ENCODE measurements at regions of chr3 and their contacts with region 1.

Region 1: DNA sequence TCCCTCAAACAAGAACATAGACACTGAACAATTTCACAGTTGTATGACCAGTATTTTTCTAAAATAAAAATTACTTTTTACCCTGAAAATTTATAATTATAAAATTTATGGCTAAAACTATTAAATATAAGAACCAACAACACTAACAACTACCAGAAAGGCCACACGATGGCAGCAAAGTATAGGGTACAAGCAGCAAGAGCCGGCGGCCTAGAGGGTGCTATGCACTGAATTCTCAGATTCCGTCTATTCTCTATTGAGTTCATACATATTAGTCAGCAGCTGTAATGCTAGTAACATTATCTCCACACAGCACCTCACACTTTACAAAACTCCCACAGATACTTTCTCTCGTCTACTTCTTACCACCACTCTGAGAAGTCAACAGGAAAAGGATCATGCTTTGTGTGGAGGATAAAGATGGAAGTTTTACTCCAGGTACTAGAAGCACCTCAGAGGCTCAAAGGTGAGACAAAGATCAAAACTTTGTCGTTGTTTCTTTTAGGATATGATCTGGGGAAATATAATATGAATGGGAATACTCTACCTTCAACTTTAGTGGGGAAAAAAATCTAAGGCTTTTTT is 160.5 kb downstream of the FGF12 start:
- DNase-seq: peak; percentile 81
- ATAC-seq: peak; percentile 71
- H3K4me3 Mint-ChIP-seq: no peak overlapping the region
- H3K27ac Mint-ChIP-seq: no peak overlapping the region
- H3K4me1 Mint-ChIP-seq: peaks cover 5% of the 10 kb centered on the region
- H3K27me3 Mint-ChIP-seq: peaks cover 10% of the 10 kb centered on the region
- CTCF ChIP-seq: peak; percentile 57

Region 2: DNA sequence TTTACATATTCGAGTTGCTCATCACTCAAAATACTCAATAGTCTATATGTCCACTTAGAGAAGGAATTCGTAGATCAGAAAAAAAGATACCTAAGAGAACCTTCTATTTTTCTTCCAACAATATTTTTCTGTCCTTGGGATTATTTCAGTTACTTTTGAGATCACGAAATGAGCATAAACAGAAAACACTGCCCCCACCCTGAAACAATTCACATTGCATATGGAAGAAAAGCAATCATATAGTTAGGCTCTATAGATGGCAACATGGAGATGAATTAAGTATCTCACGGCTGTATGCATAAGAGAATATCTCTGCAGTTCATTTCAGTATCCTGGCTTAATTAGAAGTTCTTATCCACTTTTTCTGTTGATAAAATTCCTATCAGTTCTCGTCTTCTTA is 230.5 kb before region 1 on chr3:
- CTCF ChIA-PET with region 1: no interaction called
- POLR2A ChIA-PET with region 1: no interaction called
- intact Hi-C with region 1: no loop called
- DNase-seq: no peak
- ATAC-seq: no peak
- H3K4me3 Mint-ChIP-seq: no peak overlapping the region
- H3K27ac Mint-ChIP-seq: no peak overlapping the region
- H3K4me1 Mint-ChIP-seq: peaks cover 6% of the 10 kb centered on the region
- H3K27me3 Mint-ChIP-seq: no peaks in the 10 kb centered on the region
- CTCF ChIP-seq: no peak

Region 3: DNA sequence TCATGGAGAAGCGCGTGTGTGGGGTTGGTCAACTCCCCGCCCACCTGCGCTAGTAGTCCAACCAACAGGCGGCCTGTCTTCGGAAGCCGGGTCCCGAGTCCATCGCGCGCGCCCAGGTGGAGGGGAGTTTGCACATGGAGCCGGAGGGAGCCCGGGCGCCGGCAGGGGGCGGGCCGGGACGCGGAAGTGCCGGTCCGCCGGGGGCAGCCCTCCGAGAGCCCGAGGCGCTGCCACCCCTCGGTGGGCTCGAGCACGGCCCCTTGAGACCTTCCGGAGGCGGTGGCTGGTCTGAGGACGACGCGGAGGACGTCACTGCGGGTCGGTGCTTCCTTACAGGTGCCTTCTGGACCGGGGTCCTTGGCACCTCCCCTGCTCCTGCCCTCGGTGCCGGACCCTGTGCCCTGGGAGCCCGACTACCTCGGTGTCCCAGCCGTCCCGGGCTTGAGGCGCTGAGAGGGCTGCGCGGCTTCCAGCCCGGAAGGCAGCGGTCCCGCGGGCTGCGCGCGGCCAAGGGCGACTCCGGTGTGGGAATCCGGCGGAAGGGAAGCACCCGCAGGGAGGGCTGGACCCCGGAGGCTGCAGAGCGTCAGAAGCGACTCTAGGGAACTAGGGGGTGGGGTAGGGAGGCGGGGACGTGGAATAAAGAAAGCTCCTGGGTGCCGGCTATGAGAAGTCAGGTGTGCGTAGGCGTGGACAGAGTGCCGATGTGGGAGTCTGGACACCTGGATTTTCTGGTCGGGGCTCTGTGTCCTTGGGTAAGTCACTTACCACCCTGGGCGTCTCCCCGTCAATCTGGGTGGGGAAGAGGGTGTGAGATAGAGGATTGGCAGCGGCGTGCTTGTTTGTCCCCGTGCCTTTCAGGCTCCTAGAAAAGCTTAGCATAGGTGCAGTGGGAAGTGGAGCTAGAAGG is 51.8 kb before region 1 on chr3:
- CTCF ChIA-PET with region 1: no interaction called
- POLR2A ChIA-PET with region 1: no interaction called
- intact Hi-C with region 1: no loop called
- DNase-seq: peak; percentile 1
- ATAC-seq: no peak
- H3K4me3 Mint-ChIP-seq: no peak overlapping the region
- H3K27ac Mint-ChIP-seq: no peak overlapping the region
- H3K4me1 Mint-ChIP-seq: peaks cover 2% of the 10 kb centered on the region
- H3K27me3 Mint-ChIP-seq: peaks cover 39% of the 10 kb centered on the region
- CTCF ChIP-seq: no peak

Region 4: GRCh38 chr3:192802957-192803899 is 236.4 kb after region 1 on chr3:
- CTCF ChIA-PET with region 1: interaction called, 5 read pairs
- POLR2A ChIA-PET with region 1: no interaction called
- intact Hi-C with region 1: loop called (anchors 1 kb)
- DNase-seq: no peak
- ATAC-seq: no peak
- H3K4me3 Mint-ChIP-seq: no peak overlapping the region
- H3K27ac Mint-ChIP-seq: no peak overlapping the region
- H3K4me1 Mint-ChIP-seq: no peaks in the 10 kb centered on the region
- H3K27me3 Mint-ChIP-seq: no peaks in the 10 kb centered on the region
- CTCF ChIP-seq: peak; percentile 57

Region 5: DNA sequence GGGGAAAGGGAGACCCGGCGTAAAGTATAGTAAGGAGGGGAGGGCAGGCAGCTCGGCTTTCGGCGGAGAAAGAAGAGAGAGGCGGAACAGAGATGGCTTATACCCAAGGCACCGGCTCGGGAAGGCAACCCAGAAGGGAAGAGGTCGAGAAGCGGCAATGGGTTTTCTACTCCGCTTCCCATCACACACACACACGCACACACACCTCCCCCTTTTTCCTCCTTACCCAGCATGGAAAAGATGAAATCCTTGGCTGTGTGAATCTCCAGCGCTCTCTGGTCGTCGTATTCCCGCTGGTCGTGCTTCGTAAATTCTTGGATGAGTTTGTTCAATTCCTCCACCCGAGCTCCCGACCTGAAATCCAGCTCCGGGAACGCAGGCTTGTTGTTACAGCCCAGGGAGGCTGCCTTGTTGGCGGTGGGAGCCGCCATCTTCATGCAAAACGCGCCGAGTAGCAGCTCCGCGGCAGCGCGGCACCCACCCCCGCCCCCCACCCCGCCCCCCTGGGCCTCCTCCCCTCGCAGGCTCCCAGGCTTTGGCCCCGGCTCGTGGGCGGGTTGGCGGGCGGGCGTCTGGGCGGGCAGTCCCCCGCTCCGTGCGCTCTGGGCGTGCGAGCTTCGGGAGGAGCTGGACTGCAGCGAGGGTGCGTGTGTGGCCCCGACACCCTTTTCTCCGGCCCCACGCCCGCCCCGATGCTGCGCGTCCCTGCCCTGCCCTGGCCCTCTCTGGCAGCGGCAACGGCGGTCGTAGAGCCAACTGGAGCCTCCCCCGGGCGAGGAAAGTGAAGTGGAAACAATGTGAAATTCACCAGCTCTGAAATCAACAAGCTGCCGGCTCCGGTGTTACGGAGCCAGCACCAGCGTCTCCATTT is 350.8 kb after region 1 on chr3 and contains the start of gene MB21D2:
- CTCF ChIA-PET with region 1: no interaction called
- POLR2A ChIA-PET with region 1: no interaction called
- intact Hi-C with region 1: loop called (anchors 5 kb)
- DNase-seq: peak; percentile 62
- ATAC-seq: peak; percentile 70
- H3K4me3 Mint-ChIP-seq: peak within 1 kb of the TSS; percentile 82
- H3K27ac Mint-ChIP-seq: peak within 1 kb of the TSS; percentile 83
- H3K4me1 Mint-ChIP-seq: peaks cover 19% of the 10 kb centered on the region
- H3K27me3 Mint-ChIP-seq: peaks cover 60% of the 10 kb centered on the region
- CTCF ChIP-seq: no peak
- total RNA-seq, gene MB21D2: 3.1 to 3.2 TPM

Region 6: GRCh38 chr3:193030276-193030675 is 463.5 kb after region 1 on chr3:
- CTCF ChIA-PET with region 1: no interaction called
- POLR2A ChIA-PET with region 1: no interaction called
- intact Hi-C with region 1: loop called (anchors 10 kb)
- DNase-seq: no peak
- ATAC-seq: no peak
- H3K4me3 Mint-ChIP-seq: no peak overlapping the region
- H3K27ac Mint-ChIP-seq: no peak overlapping the region
- H3K4me1 Mint-ChIP-seq: peaks cover 3% of the 10 kb centered on the region
- H3K27me3 Mint-ChIP-seq: peaks cover 8% of the 10 kb centered on the region
- CTCF ChIP-seq: no peak

Measured in activated CD8-positive, alpha-beta T cell treated with anti-CD3 and anti-CD28 coated beads for 36 hours (primary cell).